Common myeloid progenitor, CD34-positive (primary cell): ENCODE measurements at regions of chr17 and their contacts with region 1.

Region 1: DNA sequence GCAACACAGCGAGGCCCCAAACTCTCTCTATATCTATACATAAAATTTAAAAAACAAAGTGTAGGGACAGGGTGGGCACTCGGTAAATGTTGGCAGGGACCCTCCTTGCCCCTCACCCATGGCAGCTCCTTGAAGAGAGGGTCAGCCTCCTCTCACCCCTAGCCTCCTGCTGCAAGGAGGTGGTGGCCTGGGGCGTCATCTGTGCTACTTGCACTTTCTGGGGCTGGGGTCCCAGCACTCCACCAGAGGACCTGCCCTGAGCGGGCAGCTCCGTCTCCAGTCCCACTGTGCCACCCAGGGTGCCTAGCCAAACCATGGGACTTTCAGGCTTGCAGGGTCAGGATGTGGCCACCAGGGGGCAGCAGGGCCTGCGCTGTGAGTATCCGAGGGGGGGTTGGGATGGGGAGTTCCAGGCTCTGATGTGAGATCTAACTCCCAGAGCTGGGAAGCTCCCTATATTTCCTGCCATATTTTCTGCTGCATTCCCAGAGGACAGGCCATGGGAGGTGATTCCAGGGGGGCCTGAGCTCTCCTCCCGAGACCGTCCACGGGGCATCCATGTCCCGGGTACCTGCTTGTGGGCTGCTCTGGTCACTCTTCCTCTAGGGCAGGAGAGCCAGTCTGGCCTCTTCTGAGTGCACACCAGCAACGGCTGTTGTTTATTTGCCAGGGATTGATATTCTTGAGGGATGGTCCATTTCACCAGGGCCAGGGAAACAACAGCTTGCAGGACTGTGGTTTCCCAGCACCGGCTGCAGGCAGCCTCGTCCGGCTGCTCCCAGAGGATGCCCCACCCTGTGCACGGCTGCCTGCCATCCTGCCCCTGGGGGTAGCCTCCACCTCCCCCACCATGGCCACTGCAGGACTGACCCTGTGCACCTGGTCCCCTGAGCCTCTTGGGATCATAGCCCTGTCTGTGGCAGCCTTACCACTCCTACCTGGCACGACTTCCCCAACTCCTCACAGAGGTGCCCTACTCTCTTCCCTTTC is 1.1 kb downstream of the GPR142 start:
- DNase-seq: peak; percentile 42 to 56 (median 47)
- H3K4me3 ChIP-seq: peak overlapping the region in 3 of 7 experiments; percentile 36 to 60 (median 43)
- H3K27ac ChIP-seq: no peak overlapping the region
- H3K4me1 ChIP-seq: peaks cover 2 to 17% (median 15%) of the 10 kb centered on the region in 4 experiments
- H3K27me3 ChIP-seq: no peaks in the 10 kb centered on the region

Region 2: DNA sequence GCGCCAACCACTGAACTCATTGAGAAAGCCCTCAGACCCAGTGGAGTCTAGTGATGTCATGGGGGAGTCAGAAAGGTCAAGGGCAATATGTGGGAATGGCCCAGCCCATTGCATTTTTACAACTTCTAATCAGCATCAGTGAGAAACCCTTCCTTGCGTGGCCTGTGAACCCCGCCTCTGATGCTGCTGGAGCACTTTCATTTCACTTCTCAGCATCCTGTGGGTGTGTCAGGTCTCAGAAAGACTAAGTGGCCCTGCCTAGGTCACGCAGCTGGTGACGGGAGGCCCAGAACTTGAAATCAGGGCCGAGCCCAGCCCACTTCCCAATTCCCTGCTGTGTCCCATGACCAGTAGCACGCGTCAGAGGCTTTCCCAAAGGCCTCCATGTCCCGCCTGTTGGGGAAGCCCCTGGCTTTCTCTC is 88.3 kb before region 1 on chr17:
- CTCF ChIA-PET with region 1: no interaction called
- POLR2A ChIA-PET with region 1: no interaction called
- DNase-seq: no peak
- H3K4me3 ChIP-seq: no peak overlapping the region
- H3K27ac ChIP-seq: no peak overlapping the region
- H3K4me1 ChIP-seq: peaks cover 5 to 21% (median 20%) of the 10 kb centered on the region in 4 experiments
- H3K27me3 ChIP-seq: peaks cover 0 to 3% (median 0%) of the 10 kb centered on the region in 5 experiments

Region 3: GRCh38 chr17:74316220-74316619 is 52.2 kb before region 1 on chr17:
- CTCF ChIA-PET with region 1: no interaction called
- POLR2A ChIA-PET with region 1: no interaction called
- DNase-seq: no peak
- H3K4me3 ChIP-seq: no peak overlapping the region
- H3K27ac ChIP-seq: no peak overlapping the region
- H3K4me1 ChIP-seq: no peaks in the 10 kb centered on the region
- H3K27me3 ChIP-seq: peaks cover 0 to 3% (median 0%) of the 10 kb centered on the region in 5 experiments

Region 4: GRCh38 chr17:74354123-74354522 is 14.3 kb before region 1 on chr17:
- CTCF ChIA-PET with region 1: interaction called, 33 read pairs
- POLR2A ChIA-PET with region 1: no interaction called
- DNase-seq: peak; percentile 79 to 81 (median 81)
- H3K4me3 ChIP-seq: peak overlapping the region in 1 of 7 experiments; percentile 28
- H3K27ac ChIP-seq: no peak overlapping the region
- H3K4me1 ChIP-seq: peaks cover 0 to 31% (median 21%) of the 10 kb centered on the region in 4 experiments
- H3K27me3 ChIP-seq: peaks cover 0 to 91% (median 40%) of the 10 kb centered on the region in 5 experiments

Region 5: GRCh38 chr17:74493381-74493833 is 125.0 kb after region 1 on chr17:
- CTCF ChIA-PET with region 1: interaction called, 11 read pairs
- POLR2A ChIA-PET with region 1: no interaction called
- DNase-seq: peak; percentile 68 to 81 (median 75)
- H3K4me3 ChIP-seq: no peak overlapping the region
- H3K27ac ChIP-seq: no peak overlapping the region
- H3K4me1 ChIP-seq: peaks cover 0 to 29% (median 3%) of the 10 kb centered on the region in 4 experiments
- H3K27me3 ChIP-seq: no peaks in the 10 kb centered on the region

Region 6: GRCh38 chr17:74520016-74520434 is 151.6 kb after region 1 on chr17:
- CTCF ChIA-PET with region 1: interaction called, 14 read pairs
- POLR2A ChIA-PET with region 1: no interaction called
- DNase-seq: peak; percentile 75 to 93 (median 91)
- H3K4me3 ChIP-seq: no peak overlapping the region
- H3K27ac ChIP-seq: no peak overlapping the region
- H3K4me1 ChIP-seq: peaks cover 0 to 54% (median 39%) of the 10 kb centered on the region in 4 experiments
- H3K27me3 ChIP-seq: no peaks in the 10 kb centered on the region

Region 7: GRCh38 chr17:74532115-74532514 is 163.7 kb after region 1 on chr17:
- CTCF ChIA-PET with region 1: interaction called, 19 read pairs
- POLR2A ChIA-PET with region 1: interaction called, 3 read pairs
- DNase-seq: peak; percentile 94 to 98 (median 97)
- H3K4me3 ChIP-seq: peak overlapping the region in 5 of 7 experiments; percentile 56 to 76 (median 63)
- H3K27ac ChIP-seq: peak overlapping the region in 1 of 2 experiments; percentile 60
- H3K4me1 ChIP-seq: peaks cover 10 to 34% (median 23%) of the 10 kb centered on the region in 4 experiments
- H3K27me3 ChIP-seq: no peaks in the 10 kb centered on the region